ENCODE measurements at regions of chr7 and their contacts with region 1.

Region 1: DNA sequence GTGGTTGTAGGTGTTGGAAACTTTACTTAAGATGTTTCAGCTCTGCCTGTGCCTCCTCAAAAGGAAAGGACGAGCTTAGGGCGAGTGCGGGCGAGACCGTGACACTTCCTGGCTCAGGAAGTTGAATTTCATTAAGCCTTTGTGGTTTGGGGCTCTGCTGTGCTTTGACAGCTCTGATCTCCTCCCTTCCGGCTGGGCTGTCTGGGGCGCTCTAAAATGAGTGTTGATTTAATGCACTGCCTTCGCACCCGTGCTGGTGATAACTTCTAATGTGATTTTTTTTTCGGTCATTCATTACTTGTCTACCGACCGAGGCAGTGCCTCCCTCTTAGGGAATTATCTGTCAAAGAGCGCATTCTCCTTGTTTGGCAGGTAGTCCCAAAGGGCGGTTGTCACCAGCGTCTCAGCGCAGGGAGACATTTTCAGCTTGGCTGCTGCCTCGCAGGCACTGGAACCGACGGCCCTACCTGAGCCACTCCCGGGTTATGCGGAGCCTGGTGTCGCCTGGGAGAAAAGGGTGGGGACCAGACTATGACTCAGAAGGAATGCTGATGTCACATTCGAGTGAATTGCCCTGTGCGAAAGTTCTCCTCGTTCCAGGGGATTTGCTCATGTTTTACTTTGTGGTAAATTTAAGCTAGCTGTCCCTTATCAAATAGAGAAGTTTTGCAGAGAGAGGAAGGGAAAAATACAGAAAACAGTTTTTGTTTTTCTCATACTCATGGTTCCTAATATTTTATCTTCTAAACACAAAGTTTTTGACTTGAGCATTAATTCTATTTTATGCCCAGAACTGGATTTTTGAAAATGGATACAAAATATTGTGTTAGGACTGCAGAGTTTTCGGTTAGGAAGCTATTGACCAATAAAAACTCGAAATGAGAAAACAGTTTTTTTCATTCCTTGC is 920 bp downstream of the TES start:
- DNase-seq: peak; percentile 64 to 78
- ATAC-seq: peak; percentile 87 to 97 (median 94)
- H3K4me3 ChIP-seq: peak overlapping the region; percentile 68 to 91 (median 78)
- H3K27ac ChIP-seq: peak overlapping the region; percentile 81 to 98 (median 92)
- H3K4me1 ChIP-seq: peaks cover 0 to 54% (median 33%) of the 10 kb centered on the region in 9 donors
- H3K27me3 ChIP-seq: no peaks in the 10 kb centered on the region
- CTCF ChIP-seq: no peak

Region 2: DNA sequence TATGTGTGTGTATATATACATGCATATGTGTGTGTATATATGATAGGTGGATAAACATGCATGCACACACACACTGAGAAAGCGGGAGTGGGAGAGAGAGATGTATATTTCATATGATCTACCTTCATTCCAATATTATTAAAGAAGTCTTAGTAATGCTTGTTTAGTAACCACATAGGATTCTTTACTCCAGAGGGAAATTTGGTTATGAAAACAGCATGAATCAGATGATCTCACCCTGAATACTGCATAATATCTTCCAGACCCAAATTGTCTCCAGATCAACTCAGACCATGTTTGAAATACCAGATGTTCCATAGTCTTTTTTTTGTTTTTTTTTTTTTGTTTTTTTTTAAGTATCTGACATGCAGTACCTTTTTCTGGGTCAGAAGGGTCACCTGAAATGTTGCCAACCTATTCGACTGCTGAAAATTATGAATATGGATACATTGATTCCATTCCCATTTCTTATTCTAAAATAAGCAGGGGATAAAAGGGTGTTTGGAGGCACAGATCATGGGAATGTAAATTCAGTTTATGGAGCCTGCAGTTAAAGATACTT is 16.5 kb after region 1 on chr7:
- intact Hi-C with region 1: loop called in 2 of 10 experiments (anchors 2 kb)
- DNase-seq: no peak
- ATAC-seq: peak in 6 of 8 donors; percentile 44 to 74 (median 62)
- H3K4me3 ChIP-seq: no peak overlapping the region
- H3K27ac ChIP-seq: peak overlapping the region in 8 of 10 donors; percentile 4 to 80 (median 42)
- H3K4me1 ChIP-seq: peaks cover 6 to 76% (median 53%) of the 10 kb centered on the region in 9 donors
- H3K27me3 ChIP-seq: no peaks in the 10 kb centered on the region
- CTCF ChIP-seq: no peak

Measured in heart right ventricle (tissue), 16 donors.